CD14-positive monocyte (primary cell): ENCODE measurements at regions of chr1 and their contacts with region 1.

Region 1: GRCh38 chr1:94335950-94336349 is 82.2 kb upstream of the ABCD3 start:
- DNase-seq: peak; percentile 43 to 69 (median 63)
- H3K4me3 ChIP-seq: no peak overlapping the region
- H3K4me3 Mint-ChIP-seq: no peak overlapping the region
- H3K27ac ChIP-seq: no peak overlapping the region
- H3K27ac Mint-ChIP-seq: no peak overlapping the region
- H3K4me1 ChIP-seq: peaks cover 24 to 25% of the 10 kb centered on the region in 2 donors
- H3K4me1 Mint-ChIP-seq: peaks cover 30% of the 10 kb centered on the region
- H3K27me3 ChIP-seq: no peaks in the 10 kb centered on the region
- H3K27me3 Mint-ChIP-seq: peaks cover 9 to 11% (median 9%) of the 10 kb centered on the region in 3 donors
- CTCF ChIP-seq: peak; percentile 76

Region 2: DNA sequence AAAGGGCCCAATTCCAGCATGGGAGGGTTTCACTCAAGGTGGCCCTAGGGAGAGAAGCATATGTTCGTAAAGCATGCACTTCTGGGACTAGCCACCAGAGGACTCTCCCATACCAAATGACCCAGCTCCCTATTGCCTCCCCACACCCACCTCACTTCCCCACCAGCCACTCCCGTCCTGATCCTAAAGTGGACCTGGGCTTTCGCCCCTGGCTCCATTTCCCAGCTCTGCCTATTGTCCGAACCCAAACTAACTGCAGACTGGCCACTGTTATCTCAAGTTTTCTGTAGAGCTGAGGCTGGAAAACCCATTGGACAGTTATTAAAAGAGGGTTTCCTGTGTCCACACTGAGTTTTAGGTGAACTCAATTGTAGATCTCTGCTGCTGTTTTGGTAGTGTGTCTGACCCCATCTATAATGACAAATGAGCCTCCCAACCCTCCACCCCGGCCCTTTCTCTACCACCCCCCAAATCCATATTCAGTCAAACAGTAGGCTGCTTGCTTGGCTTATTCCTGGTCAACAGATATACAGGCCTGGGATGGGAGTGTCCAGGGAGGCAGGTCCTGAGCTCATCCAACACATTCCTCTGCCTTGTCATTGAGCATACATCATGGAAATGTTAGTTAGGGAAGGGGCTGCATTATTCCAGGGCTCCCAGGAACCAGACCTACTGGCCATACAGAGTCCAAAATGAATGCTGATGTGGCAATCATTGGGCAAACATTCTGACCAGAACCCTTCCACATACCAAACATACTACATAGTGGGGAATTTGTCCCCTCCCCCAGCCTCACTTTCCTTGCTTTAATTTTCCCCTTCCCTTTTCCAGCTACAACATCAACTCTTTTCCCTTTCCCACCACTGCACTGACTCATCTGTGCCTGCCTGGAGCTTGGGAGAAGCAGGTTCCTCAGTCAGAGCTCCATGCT is 274.2 kb before region 1 on chr1:
- intact Hi-C with region 1: loop called (anchors 5 kb)
- DNase-seq: peak; percentile 36 to 61 (median 58)
- H3K4me3 ChIP-seq: no peak overlapping the region
- H3K4me3 Mint-ChIP-seq: peak overlapping the region in 1 of 2 donors; percentile 32
- H3K27ac ChIP-seq: no peak overlapping the region
- H3K27ac Mint-ChIP-seq: no peak overlapping the region
- H3K4me1 ChIP-seq: no peaks in the 10 kb centered on the region
- H3K4me1 Mint-ChIP-seq: peaks cover 2% of the 10 kb centered on the region
- H3K27me3 ChIP-seq: peaks cover 15 to 34% of the 10 kb centered on the region in 2 donors
- H3K27me3 Mint-ChIP-seq: peaks cover 20 to 42% (median 21%) of the 10 kb centered on the region in 3 donors
- CTCF ChIP-seq: peak; percentile 91

Region 3: DNA sequence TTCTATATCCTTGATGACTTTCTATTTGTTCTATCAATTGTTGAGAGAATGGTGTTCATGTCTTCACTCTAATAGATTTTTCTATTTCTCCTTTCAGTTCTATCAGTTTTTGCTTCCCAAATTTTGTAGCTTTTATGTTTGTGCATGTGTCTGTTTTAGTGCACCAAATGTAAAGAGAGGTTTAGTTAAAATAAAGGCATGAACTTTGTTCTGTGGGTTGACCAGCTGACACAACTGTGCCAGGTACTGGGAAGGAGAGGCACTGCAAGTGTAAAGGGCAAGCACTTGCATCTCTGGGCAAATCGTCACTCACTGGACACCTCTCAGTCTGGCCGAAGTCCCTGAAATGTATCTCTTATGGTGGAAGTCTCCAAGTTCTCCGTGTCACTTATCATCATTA is 43.7 kb after region 1 on chr1:
- intact Hi-C with region 1: no loop called
- DNase-seq: no peak
- H3K4me3 ChIP-seq: no peak overlapping the region
- H3K4me3 Mint-ChIP-seq: no peak overlapping the region
- H3K27ac ChIP-seq: no peak overlapping the region
- H3K27ac Mint-ChIP-seq: no peak overlapping the region
- H3K4me1 ChIP-seq: peaks cover 2% of the 10 kb centered on the region in 2 donors
- H3K4me1 Mint-ChIP-seq: peaks cover 2% of the 10 kb centered on the region
- H3K27me3 ChIP-seq: no peaks in the 10 kb centered on the region
- H3K27me3 Mint-ChIP-seq: peaks cover 2 to 4% (median 2%) of the 10 kb centered on the region in 3 donors
- CTCF ChIP-seq: no peak